Posterior cingulate gyrus (tissue), 11 donors: ENCODE measurements at regions of chr5 and their contacts with region 1.

Region 1: DNA sequence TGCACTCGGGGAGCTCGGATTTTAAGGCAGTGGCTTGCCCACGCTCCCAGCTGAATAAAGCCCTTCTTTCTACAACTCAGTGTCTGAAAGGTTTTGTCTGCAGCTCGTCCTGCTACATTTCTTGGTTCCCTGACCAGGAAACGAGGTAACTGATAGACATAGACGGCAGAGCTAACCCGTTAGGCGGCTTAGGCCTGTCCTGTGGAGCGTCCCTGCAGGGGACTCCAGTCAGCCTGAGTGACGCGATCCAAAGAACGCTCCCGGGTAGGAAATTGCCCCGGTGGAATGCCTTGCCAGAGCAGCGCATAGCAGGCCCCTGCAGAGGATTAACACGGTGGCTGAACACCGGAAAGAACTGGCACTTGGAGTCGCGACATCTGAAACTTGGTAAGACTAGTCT is 1.8 kb upstream of the SELENOP start:
- DNase-seq: peak in 5 of 10 donors; percentile 47 to 87 (median 66)

Region 2: GRCh38 chr5:42858031-42858643 is 44.6 kb after region 1 on chr5:
- intact Hi-C with region 1: loop called (anchors 1 kb)
- DNase-seq: peak in 2 of 10 donors; percentile 58 to 81